Endothelial cell of umbilical vein (primary cell): ENCODE measurements at regions of chr5 and their contacts with region 1.

Region 1: GRCh38 chr5:92909602-92909962 is 671.4 kb downstream of the NR2F1-AS1 start:
- DNase-seq: peak; percentile 53
- H3K4me3 ChIP-seq: no peak overlapping the region
- H3K27ac ChIP-seq: no peak overlapping the region
- H3K4me1 ChIP-seq: peaks cover 16% of the 10 kb centered on the region
- H3K27me3 ChIP-seq: no peaks in the 10 kb centered on the region
- CTCF ChIP-seq: peak; percentile 68 to 74
- POLR2A ChIP-seq: no peak

Region 2: GRCh38 chr5:92945630-92946097 is 36.1 kb after region 1 on chr5:
- CTCF ChIA-PET with region 1: interaction called, 11 read pairs
- POLR2A ChIA-PET with region 1: no interaction called
- dilution Hi-C with region 1: no loop called
- intact Hi-C with region 1: no loop called
- DNase-seq: peak; percentile 56
- H3K4me3 ChIP-seq: peak overlapping the region in 1 of 3 experiments; percentile 28
- H3K27ac ChIP-seq: no peak overlapping the region
- H3K4me1 ChIP-seq: peaks cover 16% of the 10 kb centered on the region
- H3K27me3 ChIP-seq: no peaks in the 10 kb centered on the region
- CTCF ChIP-seq: no peak
- POLR2A ChIP-seq: no peak

Region 3: DNA sequence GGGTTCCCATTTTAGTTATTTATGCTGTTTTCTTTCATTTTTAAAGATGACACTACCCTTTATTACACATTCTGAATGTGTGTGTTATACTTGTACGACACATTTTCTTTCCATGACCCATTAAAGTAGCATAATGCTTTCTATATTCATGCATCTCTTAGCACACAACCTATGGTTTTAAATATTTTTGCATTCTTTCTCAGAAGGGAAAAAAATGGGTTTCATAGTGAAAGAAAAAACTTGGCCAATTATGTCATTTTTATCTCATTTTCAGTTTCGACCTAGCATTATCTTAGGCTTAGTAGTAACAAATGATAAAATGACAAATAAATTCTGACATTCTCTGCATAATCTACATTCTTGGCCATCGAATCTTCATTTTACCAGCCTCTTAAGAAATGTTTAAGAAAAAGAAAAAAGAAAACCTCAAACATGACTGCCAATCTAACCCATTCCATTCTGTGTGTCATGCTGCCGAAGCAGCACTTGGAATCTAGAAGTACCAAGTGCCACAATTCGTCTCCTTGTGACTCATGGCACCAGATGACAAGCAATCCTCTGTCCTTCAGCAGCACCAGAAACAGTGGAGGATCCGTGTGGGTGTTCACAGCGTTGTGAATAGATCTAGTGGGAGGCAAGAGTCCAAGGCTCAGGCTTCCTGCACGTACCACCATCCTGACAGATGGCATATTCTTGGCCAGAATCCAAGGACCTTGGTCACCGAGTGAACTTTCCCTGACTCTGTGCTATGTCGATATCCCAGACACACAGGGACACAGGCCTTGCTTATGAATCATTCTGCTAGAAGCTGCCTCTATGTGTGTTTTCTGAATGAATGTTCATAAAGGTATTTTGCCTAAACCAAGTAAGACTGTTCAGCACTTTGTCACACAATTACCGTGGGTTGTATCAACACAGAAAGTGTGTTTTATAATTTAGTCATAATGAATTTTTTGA is 168.8 kb after region 1 on chr5:
- CTCF ChIA-PET with region 1: no interaction called
- POLR2A ChIA-PET with region 1: no interaction called
- dilution Hi-C with region 1: no loop called
- intact Hi-C with region 1: loop called (anchors 2 kb)
- DNase-seq: peak; percentile 99
- H3K4me3 ChIP-seq: no peak overlapping the region
- H3K27ac ChIP-seq: peak overlapping the region; percentile 89
- H3K4me1 ChIP-seq: peaks cover 18% of the 10 kb centered on the region
- H3K27me3 ChIP-seq: no peaks in the 10 kb centered on the region
- CTCF ChIP-seq: no peak
- POLR2A ChIP-seq: peak; percentile 50

Region 4: GRCh38 chr5:93092349-93093105 is 182.9 kb after region 1 on chr5:
- CTCF ChIA-PET with region 1: interaction called, 13 read pairs
- POLR2A ChIA-PET with region 1: no interaction called
- dilution Hi-C with region 1: no loop called
- intact Hi-C with region 1: no loop called
- DNase-seq: peak; percentile 82
- H3K4me3 ChIP-seq: no peak overlapping the region
- H3K27ac ChIP-seq: no peak overlapping the region
- H3K4me1 ChIP-seq: no peaks in the 10 kb centered on the region
- H3K27me3 ChIP-seq: no peaks in the 10 kb centered on the region
- CTCF ChIP-seq: peak; percentile 13 to 33
- POLR2A ChIP-seq: no peak

Region 5: DNA sequence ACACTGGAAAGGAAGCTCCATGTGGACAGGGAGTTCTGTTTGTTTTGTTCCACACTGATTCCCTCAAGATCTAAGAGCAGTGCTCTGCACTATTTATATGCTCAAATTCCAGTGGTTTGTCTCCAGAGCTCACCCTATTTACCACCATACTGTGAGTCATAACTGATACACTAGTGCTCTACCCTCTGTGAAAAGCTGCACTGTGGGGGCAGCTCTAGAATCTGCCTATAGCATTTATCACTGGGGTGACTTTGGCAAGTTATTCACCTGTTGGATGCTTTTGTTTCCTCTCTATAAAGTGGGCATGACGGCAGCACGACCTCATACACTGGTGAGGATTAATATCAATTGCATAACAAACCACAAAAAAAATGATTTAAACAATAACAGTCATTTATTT is 363.6 kb after region 1 on chr5:
- CTCF ChIA-PET with region 1: interaction called, 6 read pairs
- POLR2A ChIA-PET with region 1: no interaction called
- dilution Hi-C with region 1: no loop called
- intact Hi-C with region 1: loop called (anchors 1 kb)
- DNase-seq: peak; percentile 55
- H3K4me3 ChIP-seq: no peak overlapping the region
- H3K27ac ChIP-seq: peak overlapping the region; percentile 99
- H3K4me1 ChIP-seq: peaks cover 30% of the 10 kb centered on the region
- H3K27me3 ChIP-seq: no peaks in the 10 kb centered on the region
- CTCF ChIP-seq: no peak
- POLR2A ChIP-seq: no peak

Region 6: DNA sequence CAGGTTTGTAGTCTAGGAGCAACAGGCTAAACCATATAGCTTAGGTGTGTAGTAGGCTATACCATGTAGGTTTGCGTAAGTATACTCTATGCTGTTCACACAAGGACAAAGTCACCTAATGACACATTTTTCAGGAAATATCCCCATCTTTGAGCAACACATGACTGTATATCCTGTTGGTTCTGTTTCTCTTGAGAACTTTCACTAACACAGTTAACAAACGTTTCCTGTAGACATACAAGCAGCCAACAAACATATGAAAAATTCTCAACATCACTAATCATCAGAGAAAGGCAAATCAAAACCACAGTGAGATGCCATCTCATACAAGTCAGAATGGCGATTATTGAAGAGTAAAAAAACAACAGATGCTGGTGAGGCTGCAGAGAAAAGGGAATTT is 603.2 kb after region 1 on chr5:
- CTCF ChIA-PET with region 1: no interaction called
- POLR2A ChIA-PET with region 1: no interaction called
- dilution Hi-C with region 1: no loop called
- intact Hi-C with region 1: loop called (anchors 1 kb)
- DNase-seq: peak; percentile 95
- H3K4me3 ChIP-seq: no peak overlapping the region
- H3K27ac ChIP-seq: peak overlapping the region; percentile 86
- H3K4me1 ChIP-seq: peaks cover 25% of the 10 kb centered on the region
- H3K27me3 ChIP-seq: no peaks in the 10 kb centered on the region
- CTCF ChIP-seq: no peak
- POLR2A ChIP-seq: no peak

Region 7: DNA sequence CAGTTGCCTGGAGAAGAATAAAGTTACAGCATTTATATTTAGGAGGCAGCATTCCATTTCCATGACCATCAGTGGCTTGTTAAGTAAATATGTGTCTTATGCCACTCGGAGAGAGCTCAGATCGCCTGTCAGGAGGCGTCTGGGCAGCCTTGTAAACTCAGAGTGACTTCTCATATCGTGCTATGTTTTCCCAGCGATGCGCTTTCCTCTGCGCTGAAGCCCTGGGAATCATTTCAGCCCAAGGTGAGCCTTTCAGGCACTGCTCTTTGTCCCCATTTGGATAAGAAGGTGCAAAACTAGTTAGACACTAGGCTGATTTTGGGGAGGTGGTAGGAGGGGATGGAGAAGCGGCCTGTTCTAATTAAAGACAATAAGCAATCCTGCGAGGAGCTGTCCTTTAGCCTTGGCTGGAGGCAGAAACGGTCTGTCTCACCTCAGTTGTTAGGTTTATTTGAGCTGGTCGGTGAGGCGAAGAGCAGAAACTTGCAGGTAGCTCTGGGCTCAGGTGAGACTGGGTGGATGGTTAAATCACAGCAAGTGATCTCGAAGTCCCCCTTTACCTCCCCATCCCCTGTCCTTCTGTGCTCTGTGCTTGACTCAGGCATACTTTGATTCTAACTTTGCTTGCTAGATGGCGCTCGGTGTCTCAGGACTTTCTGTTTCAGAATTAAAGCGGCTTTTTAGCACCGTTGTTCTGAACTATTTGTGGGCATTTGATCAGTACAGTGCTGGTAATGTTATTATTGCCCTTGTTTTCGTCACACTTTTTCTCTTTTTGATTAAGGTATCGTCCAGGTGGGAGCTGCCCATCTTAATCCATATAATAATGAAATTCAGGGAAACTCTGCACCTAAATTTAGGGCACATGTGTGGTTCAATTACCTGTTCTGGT is 698.0 kb after region 1 on chr5:
- CTCF ChIA-PET with region 1: interaction called, 15 read pairs
- POLR2A ChIA-PET with region 1: no interaction called
- dilution Hi-C with region 1: no loop called
- intact Hi-C with region 1: no loop called
- DNase-seq: peak; percentile 74
- H3K4me3 ChIP-seq: no peak overlapping the region
- H3K27ac ChIP-seq: no peak overlapping the region
- H3K4me1 ChIP-seq: peaks cover 6% of the 10 kb centered on the region
- H3K27me3 ChIP-seq: peaks cover 71 to 98% of the 10 kb centered on the region in 2 experiments
- CTCF ChIP-seq: peak; percentile 28 to 59
- POLR2A ChIP-seq: no peak